ENCODE measurements at regions of chr18 and their contacts with region 1.

Region 1: GRCh38 chr18:34837769-34838272 is 127.7 kb downstream of the DTNA start:
- DNase-seq: no peak
- H3K4me3 ChIP-seq: peak overlapping the region in 1 of 2 donors; percentile 43
- H3K27ac ChIP-seq: peak overlapping the region; percentile 77 to 85
- H3K4me1 ChIP-seq: peaks cover 0 to 29% of the 10 kb centered on the region in 2 donors
- H3K27me3 ChIP-seq: no peaks in the 10 kb centered on the region
- CTCF ChIP-seq: no peak

Region 2: DNA sequence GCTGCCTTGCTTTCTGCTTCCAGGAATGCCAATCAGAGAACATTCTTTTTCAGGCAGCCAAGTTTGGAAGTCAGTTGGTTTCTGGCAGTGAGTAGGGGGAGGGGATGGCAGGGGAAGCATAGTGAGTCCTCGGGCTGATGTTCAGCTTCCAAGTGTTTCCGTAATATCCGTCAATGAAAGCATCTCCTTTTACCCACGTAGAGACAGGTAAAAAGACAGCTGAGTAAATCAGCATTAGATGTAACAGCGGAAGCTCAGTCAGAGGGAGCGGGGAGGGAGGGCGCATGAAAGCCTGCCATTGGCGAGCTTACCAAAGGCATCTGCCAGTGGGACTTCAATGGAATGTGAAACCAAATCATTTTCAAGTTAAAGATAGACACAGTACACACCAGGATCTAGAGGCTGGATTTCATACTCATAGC is 244.8 kb before region 1 on chr18:
- intact Hi-C with region 1: loop called (anchors 1 kb)
- DNase-seq: peak in 1 of 2 donors; percentile 78
- H3K4me3 ChIP-seq: peak overlapping the region; percentile 42 to 67
- H3K27ac ChIP-seq: peak overlapping the region; percentile 67 to 76
- H3K4me1 ChIP-seq: peaks cover 0 to 13% of the 10 kb centered on the region in 2 donors
- H3K27me3 ChIP-seq: no peaks in the 10 kb centered on the region
- CTCF ChIP-seq: no peak

Region 3: GRCh38 chr18:34880882-34881834 is 43.3 kb after region 1 on chr18:
- intact Hi-C with region 1: loop called (anchors 2 kb)
- DNase-seq: peak in 1 of 2 donors; percentile 72
- H3K4me3 ChIP-seq: no peak overlapping the region
- H3K27ac ChIP-seq: peak overlapping the region; percentile 86 to 88
- H3K4me1 ChIP-seq: peaks cover 4 to 45% of the 10 kb centered on the region in 2 donors
- H3K27me3 ChIP-seq: no peaks in the 10 kb centered on the region
- CTCF ChIP-seq: peak in 1 of 3 experiments; percentile 27

Region 4: GRCh38 chr18:35040988-35041814 is 203.4 kb after region 1 on chr18 and contains the start of gene MAPRE2:
- intact Hi-C with region 1: loop called (anchors 5 kb)
- DNase-seq: peak; percentile 97 to 100
- H3K4me3 ChIP-seq: peak within 1 kb of the TSS; percentile 79 to 82
- H3K27ac ChIP-seq: peak within 1 kb of the TSS; percentile 76 to 82
- H3K4me1 ChIP-seq: peaks cover 0 to 27% of the 10 kb centered on the region in 2 donors
- H3K27me3 ChIP-seq: no peaks in the 10 kb centered on the region
- CTCF ChIP-seq: no peak
- total RNA-seq, gene MAPRE2: 22.4 TPM

Measured in ascending aorta (tissue), 2 donors.